MCF 10A (cell line): ENCODE measurements at regions of chr17 and their contacts with region 1.

Region 1: DNA sequence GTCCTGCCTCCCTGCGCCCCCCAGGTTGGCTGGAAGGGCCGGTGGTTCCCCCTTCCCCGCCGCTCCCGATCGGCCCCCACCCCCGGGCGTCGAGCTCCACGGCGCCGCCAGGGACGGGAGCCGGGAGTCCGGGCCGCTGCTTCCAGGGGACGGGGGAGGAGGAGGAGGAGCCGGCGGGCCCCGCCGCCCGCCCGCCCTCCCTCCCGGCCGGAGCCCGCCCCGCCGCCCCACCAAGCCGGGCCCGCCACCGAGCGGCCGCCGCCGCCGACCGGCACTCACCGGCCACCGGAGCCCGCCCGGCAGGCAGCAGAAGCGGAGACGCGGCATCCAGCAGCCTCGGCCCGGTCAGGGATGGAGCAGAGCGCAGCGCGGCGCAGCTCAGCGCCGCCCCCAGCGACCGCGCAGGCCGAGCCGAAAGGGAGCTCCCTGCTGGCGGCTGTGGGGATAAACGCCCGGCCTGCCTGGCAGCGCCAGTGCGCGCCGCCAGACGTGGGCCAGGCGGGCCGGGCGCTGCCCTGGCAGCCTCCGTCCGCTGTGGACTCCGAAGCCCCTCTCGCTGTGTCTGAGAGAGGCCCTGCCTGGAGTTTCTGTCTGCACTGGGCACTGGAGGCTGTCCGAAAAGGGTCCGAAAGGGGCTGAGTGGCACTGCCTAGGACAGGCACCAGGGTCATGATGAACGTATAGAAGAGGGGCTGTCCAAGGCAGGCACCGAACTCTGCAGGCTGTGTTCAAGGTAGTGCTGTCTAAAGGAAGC is at the start of gene MYO18A:
- DNase-seq: peak; percentile 76
- H3K4me3 Mint-ChIP-seq: peak within 1 kb of the TSS; percentile 81
- H3K27ac Mint-ChIP-seq: peak within 1 kb of the TSS; percentile 93
- H3K4me1 Mint-ChIP-seq: peaks cover 34% of the 10 kb centered on the region
- H3K27me3 Mint-ChIP-seq: no peaks in the 10 kb centered on the region
- CTCF ChIP-seq: peak; percentile 76
- total RNA-seq, gene MYO18A: 24.0 and 24.8 TPM in 2 replicates

Region 2: GRCh38 chr17:28585851-28586250 is 594.4 kb before region 1 on chr17:
- CTCF ChIA-PET with region 1: no interaction called
- POLR2A ChIA-PET with region 1: no interaction called
- intact Hi-C with region 1: no loop called
- DNase-seq: no peak
- H3K4me3 Mint-ChIP-seq: no peak overlapping the region
- H3K27ac Mint-ChIP-seq: no peak overlapping the region
- H3K4me1 Mint-ChIP-seq: no peaks in the 10 kb centered on the region
- H3K27me3 Mint-ChIP-seq: no peaks in the 10 kb centered on the region
- CTCF ChIP-seq: no peak

Region 3: GRCh38 chr17:29124117-29124924 is 55.9 kb before region 1 on chr17:
- CTCF ChIA-PET with region 1: interaction called, 23 read pairs
- POLR2A ChIA-PET with region 1: interaction called, 4 read pairs
- intact Hi-C with region 1: no loop called
- DNase-seq: peak; percentile 83
- H3K4me3 Mint-ChIP-seq: no peak overlapping the region
- H3K27ac Mint-ChIP-seq: peak overlapping the region; percentile 82
- H3K4me1 Mint-ChIP-seq: peaks cover 13% of the 10 kb centered on the region
- H3K27me3 Mint-ChIP-seq: no peaks in the 10 kb centered on the region
- CTCF ChIP-seq: peak; percentile 77

Region 4: DNA sequence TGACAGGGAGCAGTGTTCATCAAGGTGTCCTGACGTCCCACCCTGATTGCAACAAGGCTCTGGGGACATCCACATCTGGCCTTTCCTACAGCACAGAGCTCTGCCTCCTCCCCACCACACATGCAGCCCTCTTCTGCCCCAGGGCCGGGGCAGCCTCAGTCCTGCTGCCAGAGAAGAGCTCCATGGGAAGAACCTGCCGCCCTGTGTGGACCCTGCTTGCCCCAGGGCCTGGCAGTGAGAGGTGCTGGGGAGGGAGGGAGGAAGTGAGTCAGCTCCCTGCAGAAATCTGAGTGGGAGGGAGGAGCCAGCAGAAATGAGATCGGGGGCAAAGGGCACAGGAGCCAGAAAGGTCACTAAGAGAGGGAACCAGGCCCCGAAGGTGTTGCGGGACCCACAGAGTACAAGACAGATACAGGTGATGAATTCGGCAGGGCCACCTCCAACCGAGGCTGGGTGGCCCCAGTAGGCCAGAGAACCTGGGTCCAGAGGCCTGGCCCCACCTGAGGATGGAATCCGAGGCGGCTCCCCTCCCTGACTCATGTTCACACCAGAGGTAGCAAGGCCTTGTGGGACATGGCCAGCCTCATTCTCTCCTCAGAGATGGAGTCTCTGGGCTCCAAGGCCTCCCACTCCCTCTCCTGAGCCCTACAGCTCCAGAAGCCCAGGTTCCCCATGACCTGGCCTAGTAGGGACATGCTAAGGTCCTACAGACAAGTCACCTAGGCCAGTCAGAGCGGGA is 24.8 kb before region 1 on chr17:
- CTCF ChIA-PET with region 1: interaction called, 191 read pairs
- POLR2A ChIA-PET with region 1: interaction called, 231 read pairs
- intact Hi-C with region 1: no loop called
- DNase-seq: peak; percentile 94
- H3K4me3 Mint-ChIP-seq: peak overlapping the region; percentile 30
- H3K27ac Mint-ChIP-seq: peak overlapping the region; percentile 88
- H3K4me1 Mint-ChIP-seq: peaks cover 73% of the 10 kb centered on the region
- H3K27me3 Mint-ChIP-seq: no peaks in the 10 kb centered on the region
- CTCF ChIP-seq: no peak

Region 5: DNA sequence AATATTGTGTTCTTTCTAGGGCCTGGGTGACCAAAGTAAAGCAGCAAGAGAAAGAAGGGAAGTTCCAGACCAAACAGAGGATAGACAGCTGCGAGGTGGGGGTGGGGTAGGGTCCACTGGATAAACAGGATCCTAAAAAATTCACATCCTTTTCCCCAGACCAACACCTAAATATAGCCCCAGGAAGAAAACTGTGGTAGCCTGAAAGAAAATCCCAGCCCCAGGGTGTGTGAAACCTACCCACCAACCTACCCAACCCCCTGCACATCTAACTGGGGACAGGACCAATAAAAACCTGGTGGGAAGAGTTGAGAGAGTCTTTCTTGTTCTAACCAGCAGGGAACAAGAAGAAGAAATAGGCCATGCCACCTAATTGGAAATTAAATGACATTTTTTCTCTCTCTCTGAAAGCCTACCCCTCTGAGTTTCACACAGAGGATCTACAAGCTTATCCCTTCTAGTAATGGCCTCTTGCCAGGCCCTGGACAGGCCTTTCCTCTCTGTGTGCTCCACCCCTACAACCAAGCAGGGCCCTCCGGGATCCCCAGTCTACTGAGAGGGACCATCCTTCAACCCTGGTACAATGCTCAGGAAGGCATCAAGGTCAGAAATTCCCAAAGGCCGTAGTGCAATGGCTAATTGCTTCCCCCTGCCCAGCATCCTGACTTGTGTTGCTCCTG is 12.0 kb before region 1 on chr17:
- CTCF ChIA-PET with region 1: interaction called, 8 read pairs
- POLR2A ChIA-PET with region 1: interaction called, 21 read pairs
- intact Hi-C with region 1: no loop called
- DNase-seq: no peak
- H3K4me3 Mint-ChIP-seq: no peak overlapping the region
- H3K27ac Mint-ChIP-seq: no peak overlapping the region
- H3K4me1 Mint-ChIP-seq: peaks cover 6% of the 10 kb centered on the region
- H3K27me3 Mint-ChIP-seq: no peaks in the 10 kb centered on the region
- CTCF ChIP-seq: no peak

Region 6: GRCh38 chr17:29241015-29241963 is 61.1 kb after region 1 on chr17:
- CTCF ChIA-PET with region 1: interaction called, 6 read pairs
- POLR2A ChIA-PET with region 1: interaction called, 23 read pairs
- intact Hi-C with region 1: no loop called
- DNase-seq: peak; percentile 97
- H3K4me3 Mint-ChIP-seq: no peak overlapping the region
- H3K27ac Mint-ChIP-seq: peak overlapping the region; percentile 75
- H3K4me1 Mint-ChIP-seq: peaks cover 32% of the 10 kb centered on the region
- H3K27me3 Mint-ChIP-seq: no peaks in the 10 kb centered on the region
- CTCF ChIP-seq: no peak

Region 7: DNA sequence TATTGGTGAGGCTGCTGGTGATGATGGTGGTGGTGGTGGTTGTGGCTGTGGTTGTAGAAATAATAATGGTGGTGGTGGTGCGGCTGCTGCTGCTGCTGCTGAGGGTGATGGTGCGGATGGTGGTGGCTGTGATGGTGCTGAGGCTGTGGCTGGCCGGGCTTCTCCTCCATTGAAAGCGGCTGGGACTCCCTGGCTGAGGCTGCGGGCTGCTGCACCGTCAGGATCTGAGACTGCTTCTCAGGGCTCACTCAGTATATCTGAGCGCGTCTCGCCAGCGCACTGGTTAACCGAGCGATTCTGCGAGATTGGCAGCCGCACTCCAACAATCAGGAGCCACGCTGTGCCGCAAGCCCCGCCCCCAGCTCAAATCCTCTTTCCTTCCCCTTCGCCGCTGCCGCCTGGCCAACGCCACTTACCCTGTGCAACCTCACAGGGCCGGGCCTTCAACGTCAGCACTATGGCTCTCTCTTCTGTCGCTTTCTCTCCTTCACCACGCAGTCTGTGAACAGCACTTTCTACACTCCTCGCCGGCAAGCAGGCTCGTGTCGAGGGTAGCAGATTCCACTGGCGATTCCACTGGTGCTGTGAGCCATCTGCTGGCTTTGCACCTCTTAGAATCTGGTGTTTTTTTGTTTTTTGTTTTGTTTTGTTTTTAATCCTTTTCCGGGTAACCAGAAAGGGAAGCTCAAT is 113.8 kb after region 1 on chr17 and contains the start of gene NUFIP2:
- CTCF ChIA-PET with region 1: interaction called, 7 read pairs
- POLR2A ChIA-PET with region 1: interaction called, 63 read pairs
- intact Hi-C with region 1: no loop called
- DNase-seq: peak; percentile 98
- H3K4me3 Mint-ChIP-seq: peak within 1 kb of the TSS; percentile 99
- H3K27ac Mint-ChIP-seq: peak within 1 kb of the TSS; percentile 93
- H3K4me1 Mint-ChIP-seq: peaks cover 14% of the 10 kb centered on the region
- H3K27me3 Mint-ChIP-seq: no peaks in the 10 kb centered on the region
- CTCF ChIP-seq: no peak
- total RNA-seq, gene NUFIP2: 78.6 and 88.0 TPM in 2 replicates